Activated B cell treated with CpG ODN at 0.5 μM for 24 hours (primary cell): ENCODE measurements at regions of chr19 and their contacts with region 1.

Region 1: DNA sequence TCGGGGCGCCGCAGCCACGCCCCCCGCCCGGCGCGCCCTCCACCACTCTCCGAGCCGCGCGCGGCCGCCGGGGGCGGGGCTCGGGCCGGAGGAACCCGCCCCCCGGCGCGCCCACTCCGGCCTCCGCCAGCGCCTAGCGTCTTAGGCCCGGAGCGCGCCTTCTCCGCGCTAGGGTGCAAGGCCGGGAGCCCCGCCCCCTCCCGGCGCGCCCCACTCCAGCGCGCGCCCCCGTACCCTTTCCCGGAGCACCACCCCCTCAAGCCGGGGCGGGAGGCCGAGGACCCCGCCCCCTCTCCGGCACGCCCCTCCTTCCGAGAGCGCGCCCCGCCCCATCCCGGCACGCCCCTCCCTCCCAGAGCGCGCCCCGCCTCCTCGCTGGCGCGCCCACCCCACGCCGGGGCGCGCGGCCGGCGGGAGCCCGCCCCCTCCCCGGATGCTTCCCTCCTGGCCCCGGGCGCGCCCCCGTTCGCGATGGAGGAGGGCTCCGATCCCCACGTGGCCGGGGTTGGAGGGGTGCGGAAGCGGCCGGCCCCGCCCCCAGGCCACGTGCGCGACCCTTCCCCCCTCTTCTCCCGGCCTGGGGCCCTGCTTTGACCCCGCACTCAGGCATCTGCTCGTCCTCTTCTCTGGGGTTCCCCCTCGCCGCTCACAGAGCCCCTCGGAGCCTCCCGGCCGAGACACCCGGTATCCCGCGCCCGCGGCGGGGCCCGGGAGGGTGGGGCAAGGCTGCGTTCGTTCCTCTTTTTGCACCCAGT is 524 bp upstream of the KLF16 start:
- DNase-seq: peak; percentile 92
- ATAC-seq: peak; percentile 68
- H3K4me3 Mint-ChIP-seq: peak overlapping the region; percentile 87
- H3K27ac Mint-ChIP-seq: peak overlapping the region; percentile 92
- H3K4me1 Mint-ChIP-seq: peaks cover 36% of the 10 kb centered on the region
- H3K27me3 Mint-ChIP-seq: no peaks in the 10 kb centered on the region
- CTCF ChIP-seq: no peak

Region 2: GRCh38 chr19:1260636-1261537 is 603.0 kb before region 1 on chr19:
- CTCF ChIA-PET with region 1: no interaction called
- POLR2A ChIA-PET with region 1: no interaction called
- intact Hi-C with region 1: no loop called
- DNase-seq: peak; percentile 95
- ATAC-seq: peak; percentile 63
- H3K4me3 Mint-ChIP-seq: peak overlapping the region; percentile 91
- H3K27ac Mint-ChIP-seq: peak overlapping the region; percentile 98
- H3K4me1 Mint-ChIP-seq: peaks cover 82% of the 10 kb centered on the region
- H3K27me3 Mint-ChIP-seq: no peaks in the 10 kb centered on the region
- CTCF ChIP-seq: no peak

Region 3: DNA sequence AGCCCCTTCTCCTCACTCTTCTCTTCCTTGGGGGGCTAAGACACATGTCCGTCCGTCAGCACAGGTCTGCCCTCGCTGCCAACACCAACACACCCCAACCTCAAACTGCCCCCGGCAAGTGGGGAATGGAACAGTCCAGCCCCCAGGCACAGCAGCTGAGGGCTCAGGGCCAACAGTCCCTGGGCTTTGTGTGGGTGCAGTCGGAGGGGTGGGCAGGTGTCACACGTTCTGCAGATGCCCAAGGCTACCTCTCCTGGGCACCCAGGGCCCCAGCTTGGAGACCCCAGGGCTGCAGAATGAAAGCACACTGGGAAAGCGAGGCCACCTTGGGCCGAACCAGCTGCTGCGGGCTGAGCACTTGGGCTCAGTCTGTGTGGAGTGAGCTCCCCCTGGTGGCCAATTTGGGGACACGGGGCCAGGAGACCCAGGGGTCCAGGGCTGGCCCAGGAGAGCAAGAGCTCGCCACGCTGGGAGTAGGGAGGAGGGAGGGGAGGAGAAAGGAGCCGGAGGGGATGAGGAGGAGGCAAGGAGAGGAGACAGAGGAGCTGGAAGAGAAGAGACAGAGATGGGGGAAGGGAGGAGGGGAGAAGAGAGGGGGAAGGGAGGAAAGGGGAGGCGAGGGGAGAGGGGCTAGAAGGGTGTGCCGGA is 37.9 kb before region 1 on chr19:
- CTCF ChIA-PET with region 1: no interaction called
- POLR2A ChIA-PET with region 1: no interaction called
- intact Hi-C with region 1: no loop called
- DNase-seq: peak; percentile 72
- ATAC-seq: peak; percentile 93
- H3K4me3 Mint-ChIP-seq: no peak overlapping the region
- H3K27ac Mint-ChIP-seq: no peak overlapping the region
- H3K4me1 Mint-ChIP-seq: peaks cover 3% of the 10 kb centered on the region
- H3K27me3 Mint-ChIP-seq: no peaks in the 10 kb centered on the region
- CTCF ChIP-seq: no peak

Region 4: DNA sequence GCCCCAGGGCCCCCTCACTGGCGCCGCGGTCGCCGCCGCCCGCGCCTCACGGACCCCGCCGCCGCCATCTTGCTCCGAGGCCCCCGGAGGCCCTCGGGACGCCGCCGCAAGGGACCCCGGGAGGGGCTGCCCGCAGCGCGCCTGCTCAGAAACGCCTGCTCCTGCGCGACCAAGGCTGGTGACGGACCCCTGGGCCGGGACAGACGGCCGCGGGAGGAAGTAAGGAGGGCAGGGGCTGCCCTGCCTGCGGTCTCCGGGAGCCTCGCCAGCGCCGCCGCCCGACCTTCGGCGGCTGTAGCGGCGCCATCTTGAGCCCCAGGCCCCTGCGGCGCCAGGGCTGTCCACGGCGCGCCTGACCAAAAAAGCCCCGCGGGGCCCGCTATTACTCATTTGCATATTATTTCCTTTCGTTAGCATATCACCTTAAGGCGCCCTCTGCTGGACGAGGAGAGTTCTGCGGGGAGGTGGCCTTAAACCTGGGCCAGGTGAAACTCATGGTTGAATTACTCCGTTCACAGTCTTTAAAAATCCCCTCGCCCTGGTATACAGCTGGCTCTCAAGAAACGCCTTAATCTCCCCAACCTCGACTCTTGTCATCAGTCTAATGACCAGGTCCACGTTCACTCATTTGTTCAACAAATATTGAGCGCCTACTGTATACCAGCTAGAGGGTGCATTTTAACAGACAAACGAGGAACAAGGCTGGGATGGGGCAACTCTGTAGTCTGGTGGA is 15.3 kb before region 1 on chr19 and contains the start of gene REXO1:
- CTCF ChIA-PET with region 1: interaction called, 5 read pairs
- POLR2A ChIA-PET with region 1: interaction called, 7 read pairs
- intact Hi-C with region 1: loop called (anchors 1 kb)
- DNase-seq: peak; percentile 98
- ATAC-seq: peak; percentile 74
- H3K4me3 Mint-ChIP-seq: peak within 1 kb of the TSS; percentile 88
- H3K27ac Mint-ChIP-seq: peak within 1 kb of the TSS; percentile 88
- H3K4me1 Mint-ChIP-seq: peaks cover 69% of the 10 kb centered on the region
- H3K27me3 Mint-ChIP-seq: no peaks in the 10 kb centered on the region
- CTCF ChIP-seq: peak; percentile 86
- total RNA-seq, gene REXO1: 56.3 and 69.6 TPM in 2 replicates

Region 5: GRCh38 chr19:1884719-1885334 is 20.9 kb after region 1 on chr19:
- CTCF ChIA-PET with region 1: no interaction called
- POLR2A ChIA-PET with region 1: interaction called, 11 read pairs
- intact Hi-C with region 1: loop called (anchors 2 kb)
- DNase-seq: no peak
- ATAC-seq: peak; percentile 8
- H3K4me3 Mint-ChIP-seq: peak overlapping the region; percentile 93
- H3K27ac Mint-ChIP-seq: peak overlapping the region; percentile 82
- H3K4me1 Mint-ChIP-seq: peaks cover 41% of the 10 kb centered on the region
- H3K27me3 Mint-ChIP-seq: no peaks in the 10 kb centered on the region
- CTCF ChIP-seq: no peak

Region 6: DNA sequence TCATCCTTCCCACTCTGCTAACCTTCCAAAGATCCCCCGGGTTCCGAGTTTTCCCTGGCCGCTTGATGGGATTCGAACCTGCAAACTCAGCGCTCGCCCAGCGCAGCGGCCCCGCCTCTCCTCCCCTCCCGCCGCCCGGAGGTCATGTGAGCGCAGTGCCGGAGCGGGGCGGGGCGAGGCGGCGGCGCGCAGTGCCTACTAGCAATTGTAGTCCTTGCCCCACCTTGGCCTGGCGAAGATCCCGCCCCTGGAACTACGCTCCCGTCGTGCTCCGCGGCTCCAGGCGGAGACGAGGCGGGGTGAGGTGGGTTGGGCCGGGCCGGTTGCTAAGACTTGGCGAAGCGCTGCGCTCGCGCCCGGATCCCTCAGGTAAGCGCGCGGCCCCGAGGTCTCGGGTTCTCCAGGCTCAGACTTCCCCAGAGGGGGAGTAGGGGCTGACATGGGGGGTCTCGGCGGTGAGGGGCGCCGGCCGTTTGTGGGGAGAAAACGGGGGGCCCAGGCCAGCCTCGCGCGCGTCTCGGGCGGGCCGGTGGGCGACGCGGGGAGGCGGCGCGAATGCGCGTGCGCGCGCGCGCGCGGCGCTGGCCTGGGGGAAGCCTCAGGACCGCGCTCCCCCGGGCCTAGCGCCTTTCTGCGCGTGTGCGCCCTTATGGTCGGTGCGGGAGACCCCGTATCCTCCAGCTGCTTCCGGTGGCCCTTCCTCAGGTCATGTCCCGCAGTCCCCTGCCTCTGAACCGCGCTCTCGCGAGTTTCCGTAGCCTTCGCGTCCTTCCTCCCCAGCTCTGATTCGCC is 41.4 kb after region 1 on chr19 and contains the starts of genes ADAT3 and SCAMP4:
- CTCF ChIA-PET with region 1: interaction called, 10 read pairs
- POLR2A ChIA-PET with region 1: interaction called, 40 read pairs
- intact Hi-C with region 1: loop called (anchors 1 kb)
- DNase-seq: peak; percentile 94
- ATAC-seq: peak; percentile 92
- H3K4me3 Mint-ChIP-seq: peak within 1 kb of the TSS; percentile 91
- H3K27ac Mint-ChIP-seq: peak within 1 kb of the TSS; percentile 94
- H3K4me1 Mint-ChIP-seq: peaks cover 59% of the 10 kb centered on the region
- H3K27me3 Mint-ChIP-seq: no peaks in the 10 kb centered on the region
- CTCF ChIP-seq: no peak
- total RNA-seq, gene ADAT3: 8.5 and 14.1 TPM in 2 replicates
- total RNA-seq, gene SCAMP4: 47.6 and 59.7 TPM in 2 replicates

Region 7: DNA sequence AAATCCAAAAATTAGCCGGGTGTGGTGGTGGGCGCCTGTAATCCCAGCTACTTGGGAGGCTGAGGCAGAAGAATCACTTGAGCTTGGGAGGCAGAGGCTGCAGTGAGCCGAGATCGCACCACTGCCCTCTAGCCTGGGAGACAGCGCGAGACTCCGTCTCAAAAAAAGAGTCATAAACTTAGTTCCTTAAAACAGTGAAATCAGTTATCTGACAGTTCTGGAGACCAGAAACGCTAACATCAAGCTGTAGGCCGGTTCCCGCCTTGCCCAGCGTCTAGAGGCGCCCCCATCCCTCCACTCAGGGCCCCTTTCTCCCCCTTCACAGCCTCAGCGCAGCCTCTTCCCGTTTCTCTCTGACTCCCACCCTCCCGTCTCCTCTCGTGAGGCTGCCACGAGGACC is 53.2 kb after region 1 on chr19:
- CTCF ChIA-PET with region 1: no interaction called
- POLR2A ChIA-PET with region 1: no interaction called
- intact Hi-C with region 1: no loop called
- DNase-seq: no peak
- ATAC-seq: no peak
- H3K4me3 Mint-ChIP-seq: no peak overlapping the region
- H3K27ac Mint-ChIP-seq: no peak overlapping the region
- H3K4me1 Mint-ChIP-seq: no peaks in the 10 kb centered on the region
- H3K27me3 Mint-ChIP-seq: no peaks in the 10 kb centered on the region
- CTCF ChIP-seq: no peak

Region 8: GRCh38 chr19:1942078-1942933 is 78.4 kb after region 1 on chr19:
- CTCF ChIA-PET with region 1: interaction called, 5 read pairs
- POLR2A ChIA-PET with region 1: interaction called, 15 read pairs
- intact Hi-C with region 1: loop called (anchors 1 kb)
- DNase-seq: peak; percentile 69
- ATAC-seq: peak; percentile 53
- H3K4me3 Mint-ChIP-seq: peak overlapping the region; percentile 91
- H3K27ac Mint-ChIP-seq: peak overlapping the region; percentile 96
- H3K4me1 Mint-ChIP-seq: peaks cover 46% of the 10 kb centered on the region
- H3K27me3 Mint-ChIP-seq: no peaks in the 10 kb centered on the region
- CTCF ChIP-seq: no peak

Region 9: DNA sequence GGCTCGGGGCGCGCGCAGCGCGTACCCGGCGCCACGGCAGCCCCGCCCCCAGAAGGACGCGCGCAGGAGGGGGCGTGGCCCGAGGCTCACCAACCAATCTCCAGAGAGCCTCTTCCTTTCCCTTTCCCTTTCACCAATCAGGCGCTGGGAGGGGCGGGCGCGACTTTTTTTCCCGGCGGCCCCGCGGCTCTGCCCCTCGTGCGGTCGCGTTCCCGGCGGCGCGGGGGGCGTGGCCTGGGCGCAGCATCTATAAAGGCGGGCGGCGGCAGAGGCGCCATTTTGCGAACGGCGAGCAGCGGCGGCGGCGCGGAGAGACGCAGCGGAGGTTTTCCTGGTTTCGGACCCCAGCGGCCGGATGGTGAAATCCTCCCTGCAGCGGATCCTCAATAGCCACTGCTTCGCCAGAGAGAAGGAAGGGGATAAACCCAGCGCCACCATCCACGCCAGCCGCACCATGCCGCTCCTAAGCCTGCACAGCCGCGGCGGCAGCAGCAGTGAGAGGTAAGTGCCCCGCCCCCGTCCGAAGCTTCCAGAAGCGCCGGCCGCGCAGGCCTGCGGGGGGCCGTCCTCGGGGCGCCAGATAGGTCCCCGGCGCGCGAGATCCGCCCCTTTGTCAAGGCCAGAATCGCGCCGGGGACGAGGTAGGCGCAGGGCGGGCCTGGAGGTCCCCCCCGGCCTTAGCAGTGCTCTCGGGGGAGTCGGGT is 405.5 kb after region 1 on chr19:
- CTCF ChIA-PET with region 1: no interaction called
- POLR2A ChIA-PET with region 1: no interaction called
- intact Hi-C with region 1: loop called (anchors 1 kb)
- DNase-seq: peak; percentile 100
- ATAC-seq: peak; percentile 67
- H3K4me3 Mint-ChIP-seq: peak overlapping the region; percentile 92
- H3K27ac Mint-ChIP-seq: peak overlapping the region; percentile 91
- H3K4me1 Mint-ChIP-seq: peaks cover 60% of the 10 kb centered on the region
- H3K27me3 Mint-ChIP-seq: no peaks in the 10 kb centered on the region
- CTCF ChIP-seq: no peak